Ascending aorta (tissue), 2 donors: ENCODE measurements at regions of chr12 and their contacts with region 1.

Region 1: GRCh38 chr12:132003846-132004245 is 54.1 kb downstream of the EP400 start:
- DNase-seq: no peak
- H3K4me3 ChIP-seq: no peak overlapping the region
- H3K27ac ChIP-seq: no peak overlapping the region
- H3K4me1 ChIP-seq: no peaks in the 10 kb centered on the region
- H3K27me3 ChIP-seq: no peaks in the 10 kb centered on the region
- CTCF ChIP-seq: no peak

Region 2: DNA sequence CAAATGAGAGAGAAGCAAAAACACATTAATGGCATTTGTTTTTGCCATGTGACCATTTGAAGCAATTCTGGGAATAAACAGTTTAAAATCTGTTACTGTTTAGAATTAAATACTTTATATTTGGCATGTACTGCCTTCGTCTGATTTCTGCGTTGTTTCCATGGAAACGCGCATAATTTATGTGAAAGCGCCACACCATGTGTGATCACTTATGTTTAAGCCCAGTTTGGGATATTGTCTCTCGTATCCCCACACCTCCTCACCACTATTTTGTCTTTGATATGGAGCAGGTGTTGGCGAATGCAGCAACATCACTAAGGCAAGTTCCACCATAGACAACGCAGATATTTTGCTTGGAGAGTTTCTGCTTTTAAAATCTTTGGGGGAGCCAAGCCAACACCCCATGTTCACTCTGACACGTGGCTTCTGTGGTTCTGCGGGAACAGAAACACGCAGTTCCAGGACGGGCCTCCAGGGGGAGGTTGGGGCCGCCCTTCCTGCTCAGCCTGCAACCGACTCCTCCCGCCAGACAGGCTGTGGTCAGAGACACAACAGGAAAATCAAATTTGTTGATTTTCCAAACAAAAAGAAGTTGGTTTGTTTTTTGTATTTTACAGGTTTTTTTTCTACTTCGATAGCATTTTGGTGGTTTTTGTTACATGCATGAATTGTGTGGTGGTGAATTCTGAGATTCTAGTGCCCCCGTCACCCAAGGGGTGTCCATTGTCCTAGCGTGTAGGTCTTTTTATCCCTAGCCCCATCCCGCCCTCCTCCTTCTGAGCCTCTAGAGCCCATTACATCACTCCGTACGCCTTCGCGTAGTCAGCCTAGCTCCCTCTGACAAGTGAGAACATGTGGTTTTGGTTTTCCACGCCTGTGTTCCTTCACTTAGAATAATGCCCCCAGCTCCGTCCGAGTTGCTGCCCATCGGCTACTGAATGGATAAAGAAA is 394.8 kb before region 1 on chr12:
- intact Hi-C with region 1: loop called (anchors 2 kb)
- DNase-seq: peak in 1 of 2 donors; percentile 75
- H3K4me3 ChIP-seq: peak overlapping the region in 1 of 2 donors; percentile 32
- H3K27ac ChIP-seq: no peak overlapping the region
- H3K4me1 ChIP-seq: no peaks in the 10 kb centered on the region
- H3K27me3 ChIP-seq: no peaks in the 10 kb centered on the region
- CTCF ChIP-seq: peak; percentile 42 to 77 (median 76)

Region 3: DNA sequence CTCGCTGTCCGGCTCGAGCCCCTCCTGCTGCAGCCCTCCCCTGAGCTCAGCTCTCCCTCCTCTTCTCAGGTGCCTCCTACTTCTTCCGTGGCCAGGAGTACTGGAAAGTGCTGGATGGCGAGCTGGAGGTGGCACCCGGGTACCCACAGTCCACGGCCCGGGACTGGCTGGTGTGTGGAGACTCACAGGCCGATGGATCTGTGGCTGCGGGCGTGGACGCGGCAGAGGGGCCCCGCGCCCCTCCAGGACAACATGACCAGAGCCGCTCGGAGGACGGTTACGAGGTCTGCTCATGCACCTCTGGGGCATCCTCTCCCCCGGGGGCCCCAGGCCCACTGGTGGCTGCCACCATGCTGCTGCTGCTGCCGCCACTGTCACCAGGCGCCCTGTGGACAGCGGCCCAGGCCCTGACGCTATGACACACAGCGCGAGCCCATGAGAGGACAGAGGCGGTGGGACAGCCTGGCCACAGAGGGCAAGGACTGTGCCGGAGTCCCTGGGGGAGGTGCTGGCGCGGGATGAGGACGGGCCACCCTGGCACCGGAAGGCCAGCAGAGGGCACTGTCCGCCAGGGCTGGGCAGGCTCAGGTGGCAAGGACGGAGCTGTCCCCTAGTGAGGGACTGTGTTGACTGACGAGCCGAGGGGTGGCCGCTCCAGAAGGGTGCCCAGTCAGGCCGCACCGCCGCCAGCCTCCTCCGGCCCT is 152.8 kb before region 1 on chr12:
- intact Hi-C with region 1: loop called (anchors 1 kb)
- DNase-seq: peak in 1 of 2 donors; percentile 73
- H3K4me3 ChIP-seq: no peak overlapping the region
- H3K27ac ChIP-seq: no peak overlapping the region
- H3K4me1 ChIP-seq: no peaks in the 10 kb centered on the region
- H3K27me3 ChIP-seq: no peaks in the 10 kb centered on the region
- CTCF ChIP-seq: peak; percentile 50 to 86 (median 84)

Region 4: DNA sequence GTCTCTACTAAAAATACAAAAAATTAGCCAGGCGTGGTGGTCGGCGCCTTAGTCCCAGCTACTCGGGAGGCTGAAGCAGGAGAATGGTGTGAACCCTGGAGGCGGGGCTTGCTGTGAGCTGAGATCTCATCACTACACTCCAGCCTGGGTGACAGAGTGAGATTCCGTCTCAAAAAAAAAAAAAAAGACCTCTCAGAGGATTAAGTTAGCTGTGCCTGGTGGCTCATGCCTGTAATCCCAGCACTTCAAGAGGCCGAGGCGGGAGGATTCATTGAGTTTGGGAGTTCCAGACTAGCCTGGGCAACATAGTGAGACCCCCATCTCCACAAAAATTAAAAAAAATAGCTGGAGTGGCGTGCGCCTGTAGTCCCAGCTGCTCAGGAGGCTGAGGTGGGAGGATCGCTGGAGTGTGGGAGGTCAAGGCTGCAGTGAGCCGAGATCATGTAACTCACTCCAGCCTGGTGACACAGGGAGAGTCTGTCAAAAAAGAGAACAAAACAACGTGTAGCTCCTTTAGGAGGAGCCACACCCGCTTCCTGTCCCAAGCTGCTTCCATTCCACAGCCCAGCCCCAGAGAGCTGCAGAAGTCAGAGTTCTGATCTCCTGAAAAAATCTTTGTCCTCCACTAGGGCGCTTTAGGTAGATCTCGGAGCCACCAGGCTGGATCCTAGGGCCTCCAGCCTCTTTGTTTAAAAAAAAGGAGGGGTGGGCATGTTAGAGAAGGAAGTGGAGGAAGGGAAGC is 120.9 kb before region 1 on chr12:
- intact Hi-C with region 1: no loop called
- DNase-seq: no peak
- H3K4me3 ChIP-seq: no peak overlapping the region
- H3K27ac ChIP-seq: no peak overlapping the region
- H3K4me1 ChIP-seq: no peaks in the 10 kb centered on the region
- H3K27me3 ChIP-seq: no peaks in the 10 kb centered on the region
- CTCF ChIP-seq: no peak